Activated CD8-positive, alpha-beta memory T cell treated with anti-CD3 and anti-CD28 coated beads, Interleukin-2, amount 10 ng/mL, durations not matched to agents 7 days and 5 days (primary cell): ENCODE measurements at regions of chr1 and their contacts with region 1.

Region 1: GRCh38 chr1:204506961-204507387 is 9.2 kb upstream of the MDM4 start:
- DNase-seq: peak; percentile 93
- ATAC-seq: peak; percentile 79
- H3K4me3 Mint-ChIP-seq: peak overlapping the region; percentile 85
- H3K27ac Mint-ChIP-seq: peak overlapping the region; percentile 100
- H3K4me1 Mint-ChIP-seq: peaks cover 31% of the 10 kb centered on the region
- H3K27me3 Mint-ChIP-seq: no peaks in the 10 kb centered on the region

Region 2: GRCh38 chr1:204350857-204351573 is 156.0 kb before region 1 on chr1:
- CTCF ChIA-PET with region 1: no interaction called
- DNase-seq: no peak
- ATAC-seq: peak; percentile 16
- H3K4me3 Mint-ChIP-seq: no peak overlapping the region
- H3K27ac Mint-ChIP-seq: no peak overlapping the region
- H3K4me1 Mint-ChIP-seq: no peaks in the 10 kb centered on the region
- H3K27me3 Mint-ChIP-seq: peaks cover 6% of the 10 kb centered on the region

Region 3: DNA sequence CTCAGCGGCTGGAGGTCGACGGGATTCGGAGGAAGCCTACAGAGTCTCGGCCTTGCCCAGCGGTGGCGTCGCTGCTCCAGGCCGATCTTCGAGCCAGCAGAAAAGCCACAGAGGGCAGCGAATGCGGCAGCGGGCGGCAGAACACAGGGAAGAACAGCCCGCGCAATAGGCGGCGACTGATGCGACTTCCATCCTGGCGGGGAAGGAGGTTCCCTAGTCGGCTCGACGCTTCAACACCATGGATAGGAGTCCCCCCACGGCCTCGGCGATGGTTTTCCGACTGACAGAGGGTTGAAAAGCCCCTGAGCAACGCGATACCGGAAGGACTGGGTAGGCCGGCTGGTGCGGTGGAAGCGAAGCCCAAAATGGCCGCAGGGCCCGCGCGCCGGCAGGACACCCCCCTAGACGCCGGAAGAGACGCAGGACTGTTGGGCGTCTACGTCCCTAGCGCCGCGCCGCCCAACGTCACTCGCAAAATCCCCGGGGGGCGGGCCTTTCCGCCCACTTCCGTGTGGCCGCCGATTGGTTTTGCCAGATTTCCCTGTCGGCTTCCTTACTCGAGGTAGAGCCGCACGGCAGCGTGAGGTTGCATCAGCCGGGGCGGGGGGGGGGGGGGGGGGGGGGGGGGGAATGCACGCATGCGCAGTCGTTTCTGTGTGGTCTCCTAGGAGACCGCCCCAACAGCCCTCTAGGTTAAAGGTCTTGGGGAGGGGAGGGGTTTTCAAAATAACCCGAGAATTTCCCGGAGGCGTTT is 95.3 kb before region 1 on chr1 and contains the start of gene PPP1R15B:
- CTCF ChIA-PET with region 1: interaction called, 16 read pairs
- DNase-seq: peak; percentile 98
- ATAC-seq: peak; percentile 91
- H3K4me3 Mint-ChIP-seq: peak within 1 kb of the TSS; percentile 92
- H3K27ac Mint-ChIP-seq: peak within 1 kb of the TSS; percentile 100
- H3K4me1 Mint-ChIP-seq: peaks cover 16% of the 10 kb centered on the region
- H3K27me3 Mint-ChIP-seq: no peaks in the 10 kb centered on the region
- total RNA-seq, gene PPP1R15B: 75.5 to 81.7 TPM

Region 4: DNA sequence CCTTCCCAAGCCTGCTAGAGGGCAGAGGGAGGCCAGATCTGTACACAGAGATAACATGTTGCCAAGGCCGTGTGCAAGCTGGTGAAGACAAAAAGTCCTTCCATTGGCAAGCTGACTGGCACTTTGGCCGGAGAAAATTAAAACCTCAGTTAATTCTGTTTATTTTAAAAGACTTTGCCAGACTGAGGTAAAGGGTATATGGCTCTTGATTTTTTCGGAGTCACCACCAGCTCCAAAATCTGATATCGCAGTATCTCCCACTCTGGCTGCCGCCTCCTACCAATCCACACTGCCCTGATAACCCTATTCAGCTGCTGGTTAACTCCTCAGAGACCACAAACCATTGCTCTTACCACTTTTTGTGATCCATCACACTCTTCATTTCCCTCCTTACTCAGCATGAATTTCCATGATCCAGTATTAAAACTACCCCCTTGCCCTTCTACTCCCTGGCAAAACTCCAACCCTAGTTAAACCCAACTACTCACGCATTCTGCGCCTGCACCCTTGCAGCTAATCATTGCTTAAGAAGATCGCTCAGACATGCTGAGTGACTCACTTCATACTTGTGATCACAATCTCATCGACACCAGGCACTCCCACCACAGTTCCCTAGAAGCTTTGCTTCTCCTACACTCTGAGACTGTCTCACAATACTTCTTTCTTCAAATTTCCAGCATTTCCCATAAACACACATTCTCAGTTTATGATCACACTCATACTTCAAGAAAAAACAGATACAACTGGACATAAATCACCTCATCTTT is 89.6 kb before region 1 on chr1:
- CTCF ChIA-PET with region 1: interaction called, 16 read pairs
- DNase-seq: peak; percentile 42
- ATAC-seq: peak; percentile 50
- H3K4me3 Mint-ChIP-seq: no peak overlapping the region
- H3K27ac Mint-ChIP-seq: no peak overlapping the region
- H3K4me1 Mint-ChIP-seq: peaks cover 38% of the 10 kb centered on the region
- H3K27me3 Mint-ChIP-seq: no peaks in the 10 kb centered on the region

Region 5: DNA sequence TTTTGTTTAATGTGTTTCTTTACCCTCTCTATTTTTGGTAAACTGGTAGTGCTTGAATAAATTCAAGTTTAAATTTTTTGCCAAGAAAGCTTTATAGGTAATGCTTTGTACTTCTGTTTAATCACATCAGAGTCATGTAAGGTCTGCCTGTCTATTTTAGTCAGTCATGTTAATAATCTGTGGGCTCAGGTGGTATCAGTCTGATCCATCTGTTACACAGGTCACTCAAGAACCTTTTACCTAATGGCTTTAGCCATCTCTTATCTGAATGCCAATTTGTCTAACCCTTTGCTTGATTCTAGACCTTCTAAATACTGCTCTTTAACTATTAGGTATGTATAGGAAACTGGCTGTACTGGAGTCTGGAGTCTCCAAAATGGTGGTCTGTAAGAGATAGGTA is 25.9 kb after region 1 on chr1:
- CTCF ChIA-PET with region 1: no interaction called
- DNase-seq: no peak
- ATAC-seq: no peak
- H3K4me3 Mint-ChIP-seq: no peak overlapping the region
- H3K27ac Mint-ChIP-seq: no peak overlapping the region
- H3K4me1 Mint-ChIP-seq: peaks cover 5% of the 10 kb centered on the region
- H3K27me3 Mint-ChIP-seq: no peaks in the 10 kb centered on the region